Calu3 (cell line): ENCODE measurements at regions of chr9 and their contacts with region 1.

Region 1: GRCh38 chr9:34279411-34279810 is 49.7 kb downstream of the KIF24 start:
- DNase-seq: no peak
- H3K4me3 Mint-ChIP-seq: no peak overlapping the region
- H3K27ac Mint-ChIP-seq: no peak overlapping the region
- H3K4me1 Mint-ChIP-seq: no peaks in the 10 kb centered on the region
- H3K27me3 Mint-ChIP-seq: no peaks in the 10 kb centered on the region
- CTCF ChIP-seq: no peak

Region 2: GRCh38 chr9:34222451-34222850 is 57.0 kb before region 1 on chr9:
- CTCF ChIA-PET with region 1: no interaction called
- intact Hi-C with region 1: no loop called
- DNase-seq: no peak
- H3K4me3 Mint-ChIP-seq: no peak overlapping the region
- H3K27ac Mint-ChIP-seq: peak overlapping the region; percentile 39
- H3K4me1 Mint-ChIP-seq: no peaks in the 10 kb centered on the region
- H3K27me3 Mint-ChIP-seq: no peaks in the 10 kb centered on the region
- CTCF ChIP-seq: no peak

Region 3: GRCh38 chr9:34252670-34253459 is 26.5 kb before region 1 on chr9:
- CTCF ChIA-PET with region 1: interaction called, 11 read pairs
- intact Hi-C with region 1: no loop called
- DNase-seq: peak; percentile 72
- H3K4me3 Mint-ChIP-seq: no peak overlapping the region
- H3K27ac Mint-ChIP-seq: no peak overlapping the region
- H3K4me1 Mint-ChIP-seq: no peaks in the 10 kb centered on the region
- H3K27me3 Mint-ChIP-seq: no peaks in the 10 kb centered on the region
- CTCF ChIP-seq: peak; percentile 84

Region 4: GRCh38 chr9:34349324-34349723 is 69.9 kb after region 1 on chr9:
- CTCF ChIA-PET with region 1: no interaction called
- intact Hi-C with region 1: no loop called
- DNase-seq: no peak
- H3K4me3 Mint-ChIP-seq: no peak overlapping the region
- H3K27ac Mint-ChIP-seq: no peak overlapping the region
- H3K4me1 Mint-ChIP-seq: no peaks in the 10 kb centered on the region
- H3K27me3 Mint-ChIP-seq: no peaks in the 10 kb centered on the region
- CTCF ChIP-seq: no peak

Region 5: GRCh38 chr9:34796924-34797323 is 517.5 kb after region 1 on chr9:
- CTCF ChIA-PET with region 1: no interaction called
- intact Hi-C with region 1: no loop called
- DNase-seq: no peak
- H3K4me3 Mint-ChIP-seq: no peak overlapping the region
- H3K27ac Mint-ChIP-seq: no peak overlapping the region
- H3K4me1 Mint-ChIP-seq: no peaks in the 10 kb centered on the region
- H3K27me3 Mint-ChIP-seq: peaks cover 85% of the 10 kb centered on the region
- CTCF ChIP-seq: no peak